ENCODE measurements at regions of chr13 and their contacts with region 1.

Region 1: DNA sequence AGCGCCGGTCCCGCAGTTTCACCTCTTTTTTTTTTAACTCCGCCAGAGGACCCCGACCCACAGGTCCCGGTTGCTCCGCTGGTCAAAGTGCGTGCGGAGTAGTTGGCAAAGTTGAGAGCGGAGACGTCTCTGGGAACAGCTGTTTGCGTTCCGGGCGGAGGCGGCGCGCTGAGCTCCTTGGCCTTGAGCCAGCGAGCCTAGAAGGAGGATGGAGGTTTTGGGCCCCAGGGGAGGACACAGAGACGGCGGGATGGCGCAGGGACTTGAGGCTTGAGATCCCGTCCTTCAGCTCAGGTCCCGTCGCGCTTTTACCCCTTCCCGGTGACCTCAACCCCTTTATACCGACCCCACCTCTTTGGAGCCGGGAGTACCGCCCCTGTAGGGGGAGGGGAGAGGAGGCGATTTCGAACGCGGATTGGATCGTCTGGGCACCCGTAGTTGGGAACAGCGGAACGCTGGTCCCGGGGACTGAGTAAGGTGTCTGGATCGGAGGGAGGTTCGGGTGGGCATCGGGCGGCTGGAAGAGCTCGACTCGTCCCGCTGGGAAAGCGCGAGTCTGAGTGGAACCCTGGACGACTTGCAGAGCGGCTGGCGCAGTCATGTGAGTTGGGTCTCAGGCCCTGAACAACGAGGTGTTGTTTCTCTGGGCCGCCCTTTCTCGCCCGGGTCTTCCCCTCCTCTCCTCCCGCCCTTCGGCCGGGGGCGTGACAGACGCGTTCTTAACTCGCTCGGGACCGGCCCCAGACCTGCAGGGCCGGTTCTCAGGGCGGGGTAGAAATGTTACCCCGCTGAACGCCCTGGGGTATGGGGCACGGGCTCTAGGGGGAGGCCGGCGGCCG is at the start of gene WBP4:
- DNase-seq: peak; percentile 95 to 96 (median 96)
- ATAC-seq: peak; percentile 78 to 88 (median 84)
- H3K4me3 ChIP-seq: peak within 1 kb of the TSS; percentile 54 to 90 (median 79)
- H3K27ac ChIP-seq: peak within 1 kb of the TSS; percentile 92 to 100 (median 98)
- H3K4me1 ChIP-seq: peaks cover 6 to 71% (median 60%) of the 10 kb centered on the region in 12 donors
- H3K27me3 ChIP-seq: no peaks in the 10 kb centered on the region
- CTCF ChIP-seq: peak in 6 of 12 donors; percentile 10 to 45 (median 30)
- POLR2A ChIP-seq: peak in 1 of 2 donors; percentile 58
- total RNA-seq, gene WBP4: 12.4 to 24.6 (median 20.6) TPM

Region 2: GRCh38 chr13:40770934-40771618 is 290.2 kb before region 1 on chr13 and contains the start of gene MRPS31:
- intact Hi-C with region 1: loop called in 5 of 10 experiments (anchors 5 to 10 kb)
- DNase-seq: peak; percentile 95 to 98 (median 97)
- ATAC-seq: peak; percentile 99 to 100 (median 100)
- H3K4me3 ChIP-seq: peak within 1 kb of the TSS; percentile 58 to 90 (median 75)
- H3K27ac ChIP-seq: peak within 1 kb of the TSS; percentile 63 to 92 (median 84)
- H3K4me1 ChIP-seq: peaks cover 0 to 25% (median 13%) of the 10 kb centered on the region in 12 donors
- H3K27me3 ChIP-seq: no peaks in the 10 kb centered on the region
- CTCF ChIP-seq: no peak
- POLR2A ChIP-seq: peak in 1 of 2 donors; percentile 63
- total RNA-seq, gene MRPS31: 21.9 to 33.1 (median 27.1) TPM

Region 3: GRCh38 chr13:40789275-40790133 is 271.8 kb before region 1 on chr13 and contains the start of gene SLC25A15:
- intact Hi-C with region 1: loop called in 3 of 10 experiments (anchors 5 to 10 kb)
- DNase-seq: peak; percentile 85 to 91 (median 88)
- ATAC-seq: peak; percentile 87 to 97 (median 94)
- H3K4me3 ChIP-seq: peak within 1 kb of the TSS; percentile 54 to 95 (median 68)
- H3K27ac ChIP-seq: peak within 1 kb of the TSS; percentile 42 to 89 (median 80)
- H3K4me1 ChIP-seq: peaks cover 0 to 15% (median 8%) of the 10 kb centered on the region in 12 donors
- H3K27me3 ChIP-seq: no peaks in the 10 kb centered on the region
- CTCF ChIP-seq: peak in 8 of 12 donors; percentile 9 to 56 (median 43)
- POLR2A ChIP-seq: peak in 1 of 2 donors; percentile 37
- total RNA-seq, gene SLC25A15: 3.7 to 10.4 (median 5.1) TPM

Region 4: GRCh38 chr13:40933508-40934204 is 127.6 kb before region 1 on chr13:
- intact Hi-C with region 1: loop called in 3 of 10 experiments (anchors 5 to 10 kb)
- DNase-seq: no peak
- ATAC-seq: no peak
- H3K4me3 ChIP-seq: no peak overlapping the region
- H3K27ac ChIP-seq: no peak overlapping the region
- H3K4me1 ChIP-seq: peaks cover 0 to 20% (median 0%) of the 10 kb centered on the region in 12 donors
- H3K27me3 ChIP-seq: no peaks in the 10 kb centered on the region
- CTCF ChIP-seq: no peak
- POLR2A ChIP-seq: no peak

Region 5: DNA sequence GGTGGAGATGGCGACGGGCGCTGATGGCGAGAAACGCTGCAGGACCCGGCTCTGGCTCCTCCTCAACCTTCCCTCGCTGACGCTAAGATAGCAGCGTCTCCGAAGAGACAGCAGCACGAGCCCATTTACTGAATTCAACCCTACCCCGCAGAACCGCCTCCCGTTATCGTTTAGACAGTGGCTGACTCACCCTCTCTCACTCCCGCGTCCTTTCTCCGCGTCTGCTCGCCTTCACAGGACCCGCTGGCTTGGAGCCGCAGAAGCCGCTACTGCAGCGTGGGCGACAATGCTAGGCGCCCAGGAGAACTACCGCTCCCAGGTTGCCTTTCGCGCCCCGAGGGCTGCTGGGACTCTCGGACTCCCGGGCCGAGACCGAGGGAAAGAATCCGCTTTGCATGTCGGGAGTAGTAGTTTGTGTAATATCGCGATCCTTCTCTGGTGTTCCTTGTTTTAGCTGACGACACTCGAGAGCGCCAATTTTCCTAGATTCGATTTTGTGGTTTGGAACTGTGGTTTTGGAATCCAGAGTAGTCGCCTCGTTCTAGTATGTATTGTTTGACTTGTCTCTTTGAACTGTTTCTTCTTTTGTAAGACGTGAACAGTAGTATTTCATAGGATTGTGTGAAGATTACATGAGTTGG is 71.3 kb after region 1 on chr13 and contains the start of gene KBTBD6:
- intact Hi-C with region 1: loop called in 2 of 10 experiments (anchors 2 to 5 kb)
- DNase-seq: peak; percentile 96 to 98 (median 97)
- ATAC-seq: peak; percentile 96 to 100 (median 99)
- H3K4me3 ChIP-seq: peak within 1 kb of the TSS; percentile 64 to 88 (median 76)
- H3K27ac ChIP-seq: peak within 1 kb of the TSS; percentile 77 to 91 (median 86)
- H3K4me1 ChIP-seq: peaks cover 0 to 48% (median 34%) of the 10 kb centered on the region in 12 donors
- H3K27me3 ChIP-seq: no peaks in the 10 kb centered on the region
- CTCF ChIP-seq: no peak
- POLR2A ChIP-seq: peak in 1 of 2 donors; percentile 72
- total RNA-seq, gene KBTBD6: 6.1 to 11.9 (median 6.7) TPM

Region 6: GRCh38 chr13:41543664-41544300 is 482.5 kb after region 1 on chr13:
- intact Hi-C with region 1: no loop called
- DNase-seq: no peak
- ATAC-seq: no peak
- H3K4me3 ChIP-seq: no peak overlapping the region
- H3K27ac ChIP-seq: no peak overlapping the region
- H3K4me1 ChIP-seq: peaks cover 3 to 25% (median 16%) of the 10 kb centered on the region in 12 donors
- H3K27me3 ChIP-seq: no peaks in the 10 kb centered on the region
- CTCF ChIP-seq: no peak
- POLR2A ChIP-seq: no peak